ENCODE measurements at regions of chr6 and their contacts with region 1.

Region 1: GRCh38 chr6:47477497-47478232 is at the start of gene CD2AP:
- DNase-seq: peak; percentile 98
- H3K4me3 ChIP-seq: peak within 1 kb of the TSS; percentile 81
- H3K27ac ChIP-seq: peak within 1 kb of the TSS; percentile 97
- H3K4me1 ChIP-seq: peaks cover 54% of the 10 kb centered on the region
- CTCF ChIP-seq: 0 out of 2 replicates have a peak, but pooled peaks have one; percentile 30
- total RNA-seq, gene CD2AP: 26.6 and 30.0 TPM in 2 replicates

Region 2: GRCh38 chr6:46637145-46637544 is 840.5 kb before region 1 on chr6:
- CTCF ChIA-PET with region 1: no interaction called
- POLR2A ChIA-PET with region 1: no interaction called
- intact Hi-C with region 1: loop called (anchors 5 kb)
- DNase-seq: peak; percentile 78
- H3K4me3 ChIP-seq: peak overlapping the region; percentile 66
- H3K27ac ChIP-seq: peak overlapping the region; percentile 97
- H3K4me1 ChIP-seq: peaks cover 98% of the 10 kb centered on the region
- CTCF ChIP-seq: no peak

Region 3: GRCh38 chr6:47242483-47243386 is 234.9 kb before region 1 on chr6:
- CTCF ChIA-PET with region 1: no interaction called
- POLR2A ChIA-PET with region 1: interaction called, 6 read pairs
- intact Hi-C with region 1: loop called (anchors 2 kb)
- DNase-seq: peak; percentile 98
- H3K4me3 ChIP-seq: peak overlapping the region; percentile 46
- H3K27ac ChIP-seq: peak overlapping the region; percentile 92
- H3K4me1 ChIP-seq: peaks cover 84% of the 10 kb centered on the region
- CTCF ChIP-seq: no peak

Region 4: DNA sequence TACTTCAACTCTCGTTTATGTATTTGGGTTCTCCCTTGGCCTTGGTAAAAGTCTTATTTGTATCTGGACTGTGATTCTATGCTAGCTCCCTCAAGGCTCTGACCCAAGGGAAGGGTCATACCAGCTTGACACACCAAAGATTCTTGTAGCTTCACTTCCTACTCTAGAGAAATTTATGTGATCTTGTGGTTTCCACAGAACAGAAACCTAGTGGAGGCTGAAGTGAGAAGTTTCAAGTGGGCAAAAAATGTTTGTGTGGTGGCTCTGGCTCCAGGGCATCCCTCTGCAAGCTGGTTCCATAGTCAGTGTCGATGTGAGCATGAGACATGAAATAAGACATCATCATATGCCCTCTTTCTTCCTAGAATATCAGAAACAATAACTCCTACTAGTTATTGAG is 119.8 kb before region 1 on chr6:
- CTCF ChIA-PET with region 1: no interaction called
- POLR2A ChIA-PET with region 1: interaction called, 10 read pairs
- intact Hi-C with region 1: loop called (anchors 2 kb)
- DNase-seq: peak; percentile 59
- H3K4me3 ChIP-seq: peak overlapping the region; percentile 7
- H3K27ac ChIP-seq: peak overlapping the region; percentile 98
- H3K4me1 ChIP-seq: peaks cover 78% of the 10 kb centered on the region
- CTCF ChIP-seq: no peak

Region 5: DNA sequence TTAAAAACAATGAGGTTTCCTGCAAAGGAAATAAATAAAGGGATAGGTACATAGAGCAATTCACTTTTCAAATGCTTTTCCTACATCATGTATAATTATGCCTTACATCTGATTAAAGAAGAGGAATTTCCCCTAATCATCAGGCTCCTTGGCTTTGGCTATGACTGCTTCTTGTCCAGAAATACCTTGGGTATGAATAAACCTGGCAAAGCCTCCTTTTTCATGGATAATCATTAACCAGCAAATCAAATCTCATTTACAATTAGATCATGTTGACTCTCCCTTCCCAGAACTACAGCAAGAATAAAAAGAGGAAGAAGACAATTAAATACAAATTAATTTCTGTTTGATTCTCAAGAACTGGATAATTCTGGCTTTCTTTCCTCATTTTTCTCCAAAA is 58.0 kb before region 1 on chr6:
- CTCF ChIA-PET with region 1: no interaction called
- POLR2A ChIA-PET with region 1: interaction called, 34 read pairs
- intact Hi-C with region 1: loop called (anchors 1 kb)
- DNase-seq: no peak
- H3K4me3 ChIP-seq: no peak overlapping the region
- H3K27ac ChIP-seq: no peak overlapping the region
- H3K4me1 ChIP-seq: peaks cover 9% of the 10 kb centered on the region
- CTCF ChIP-seq: no peak

Region 6: DNA sequence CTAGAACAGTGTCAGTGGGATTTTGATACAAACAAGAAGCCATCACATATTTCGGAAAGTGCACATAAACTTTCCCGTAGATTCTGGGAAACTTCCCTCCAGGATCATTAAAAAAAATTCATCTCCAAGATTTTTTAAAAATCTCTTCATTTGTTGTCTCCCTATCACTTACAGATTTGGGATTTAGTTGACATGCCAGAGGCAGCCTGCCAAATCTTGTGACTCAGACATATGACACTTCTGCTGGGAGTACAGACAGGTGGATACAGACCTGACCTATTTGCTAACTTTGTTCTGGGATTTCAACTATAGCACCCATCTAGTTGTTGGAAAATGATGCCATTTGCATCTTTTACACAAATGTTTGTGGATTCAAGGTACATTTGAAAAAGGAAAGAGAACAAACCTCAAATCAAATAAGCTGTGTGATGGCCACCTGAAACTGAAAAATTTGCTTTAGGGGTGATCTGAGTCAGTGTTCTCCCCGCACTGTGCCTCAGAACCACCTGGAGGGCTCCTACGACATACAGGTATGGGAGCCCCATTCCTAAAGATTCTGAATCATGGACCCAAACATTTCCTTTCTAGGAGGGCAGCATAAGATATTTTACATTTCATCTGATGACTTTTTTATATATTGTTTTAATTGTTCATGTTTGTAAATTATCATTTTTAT is 22.0 kb before region 1 on chr6:
- CTCF ChIA-PET with region 1: no interaction called
- POLR2A ChIA-PET with region 1: interaction called, 23 read pairs
- intact Hi-C with region 1: no loop called
- DNase-seq: no peak
- H3K4me3 ChIP-seq: no peak overlapping the region
- H3K27ac ChIP-seq: no peak overlapping the region
- H3K4me1 ChIP-seq: peaks cover 30% of the 10 kb centered on the region
- CTCF ChIP-seq: no peak

Region 7: GRCh38 chr6:47563162-47563561 is 85.5 kb after region 1 on chr6:
- CTCF ChIA-PET with region 1: no interaction called
- POLR2A ChIA-PET with region 1: no interaction called
- intact Hi-C with region 1: no loop called
- DNase-seq: no peak
- H3K4me3 ChIP-seq: no peak overlapping the region
- H3K27ac ChIP-seq: no peak overlapping the region
- H3K4me1 ChIP-seq: no peaks in the 10 kb centered on the region
- CTCF ChIP-seq: no peak